CD4-positive, alpha-beta T cell (primary cell): ENCODE measurements at regions of chr9 and their contacts with region 1.

Region 1: GRCh38 chr9:36487482-36488388 is 85.0 kb upstream of the MELK start:
- DNase-seq: peak; percentile 75 to 97 (median 90)
- ATAC-seq: peak; percentile 84
- H3K4me3 ChIP-seq: peak overlapping the region; percentile 75
- H3K4me3 Mint-ChIP-seq: peak overlapping the region; percentile 94
- H3K27ac ChIP-seq: peak overlapping the region; percentile 84 to 87
- H3K27ac Mint-ChIP-seq: peak overlapping the region; percentile 97
- H3K4me1 ChIP-seq: peaks cover 42% of the 10 kb centered on the region
- H3K4me1 Mint-ChIP-seq: peaks cover 67% of the 10 kb centered on the region
- H3K27me3 ChIP-seq: no peaks in the 10 kb centered on the region
- H3K27me3 Mint-ChIP-seq: no peaks in the 10 kb centered on the region
- CTCF ChIP-seq: no peak

Region 2: GRCh38 chr9:36258208-36258988 is 229.3 kb before region 1 on chr9 and contains the start of gene GNE:
- CTCF ChIA-PET with region 1: no interaction called
- POLR2A ChIA-PET with region 1: interaction called, 3 read pairs
- intact Hi-C with region 1: loop called in 1 of 2 experiments (anchors 5 kb)
- DNase-seq: peak; percentile 94 to 98 (median 97)
- ATAC-seq: peak; percentile 89
- H3K4me3 ChIP-seq: peak within 1 kb of the TSS; percentile 66
- H3K4me3 Mint-ChIP-seq: peak within 1 kb of the TSS; percentile 99
- H3K27ac ChIP-seq: peak within 1 kb of the TSS; percentile 88 to 93
- H3K27ac Mint-ChIP-seq: peak within 1 kb of the TSS; percentile 91
- H3K4me1 ChIP-seq: peaks cover 19% of the 10 kb centered on the region
- H3K4me1 Mint-ChIP-seq: peaks cover 6% of the 10 kb centered on the region
- H3K27me3 ChIP-seq: no peaks in the 10 kb centered on the region
- H3K27me3 Mint-ChIP-seq: no peaks in the 10 kb centered on the region
- CTCF ChIP-seq: no peak
- total RNA-seq, gene GNE: 12.5 to 14.6 TPM

Region 3: GRCh38 chr9:36400332-36401163 is 87.2 kb before region 1 on chr9:
- CTCF ChIA-PET with region 1: no interaction called
- POLR2A ChIA-PET with region 1: interaction called, 22 read pairs
- intact Hi-C with region 1: loop called in 1 of 2 experiments (anchors 2 kb)
- DNase-seq: peak; percentile 80 to 96 (median 90)
- ATAC-seq: peak; percentile 74
- H3K4me3 ChIP-seq: peak overlapping the region; percentile 75
- H3K4me3 Mint-ChIP-seq: peak overlapping the region; percentile 92
- H3K27ac ChIP-seq: peak overlapping the region; percentile 88 to 98
- H3K27ac Mint-ChIP-seq: peak overlapping the region; percentile 94
- H3K4me1 ChIP-seq: peaks cover 18% of the 10 kb centered on the region
- H3K4me1 Mint-ChIP-seq: peaks cover 54% of the 10 kb centered on the region
- H3K27me3 ChIP-seq: no peaks in the 10 kb centered on the region
- H3K27me3 Mint-ChIP-seq: no peaks in the 10 kb centered on the region
- CTCF ChIP-seq: no peak

Region 4: DNA sequence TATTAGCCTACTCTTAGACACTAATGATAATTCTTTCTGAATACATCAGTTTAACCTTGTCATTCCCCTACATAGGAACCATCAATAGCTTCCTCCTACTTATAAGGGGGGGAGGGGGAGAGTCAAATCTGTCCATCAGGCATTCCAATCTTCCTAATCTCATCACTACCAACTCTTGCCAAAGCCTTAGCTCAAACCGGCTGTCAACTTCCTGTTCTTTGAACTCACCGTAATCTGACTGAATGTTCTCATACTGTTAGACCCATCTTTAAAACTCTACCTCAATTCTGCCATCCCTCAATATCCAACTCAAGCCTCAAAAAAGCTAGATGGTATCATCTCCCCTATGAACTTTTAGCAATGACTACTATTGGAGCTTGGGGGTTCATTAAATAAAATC is 45.8 kb before region 1 on chr9:
- CTCF ChIA-PET with region 1: no interaction called
- POLR2A ChIA-PET with region 1: interaction called, 8 read pairs
- intact Hi-C with region 1: loop called in 1 of 2 experiments (anchors 5 kb)
- DNase-seq: peak in 4 of 14 experiments; percentile 11 to 35 (median 21)
- ATAC-seq: peak; percentile 57
- H3K4me3 ChIP-seq: no peak overlapping the region
- H3K4me3 Mint-ChIP-seq: no peak overlapping the region
- H3K27ac ChIP-seq: no peak overlapping the region
- H3K27ac Mint-ChIP-seq: no peak overlapping the region
- H3K4me1 ChIP-seq: peaks cover 28% of the 10 kb centered on the region
- H3K4me1 Mint-ChIP-seq: peaks cover 78% of the 10 kb centered on the region
- H3K27me3 ChIP-seq: no peaks in the 10 kb centered on the region
- H3K27me3 Mint-ChIP-seq: no peaks in the 10 kb centered on the region
- CTCF ChIP-seq: no peak

Region 5: DNA sequence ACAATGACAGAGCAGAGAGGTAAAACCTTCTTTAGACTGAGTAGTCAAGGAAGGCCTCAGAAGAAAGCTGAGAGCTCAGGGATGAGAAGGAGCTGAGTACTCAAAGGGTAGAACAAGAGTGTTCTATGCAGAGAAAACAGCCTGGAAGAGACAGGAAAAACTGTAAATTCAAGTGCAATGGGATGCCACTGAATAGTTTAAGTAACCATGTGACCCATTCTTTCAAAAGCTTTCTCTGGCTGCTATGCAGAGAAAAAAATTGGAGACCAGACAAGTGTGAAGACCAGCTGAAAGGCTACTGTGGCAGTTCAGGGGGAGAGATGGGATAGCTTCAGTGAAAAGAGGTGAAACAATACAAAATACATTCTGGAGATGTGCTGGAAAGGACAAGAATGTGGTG is 26.4 kb before region 1 on chr9:
- CTCF ChIA-PET with region 1: interaction called, 3 read pairs
- POLR2A ChIA-PET with region 1: interaction called, 17 read pairs
- intact Hi-C with region 1: loop called in 1 of 2 experiments (anchors 1 kb)
- DNase-seq: no peak
- ATAC-seq: no peak
- H3K4me3 ChIP-seq: no peak overlapping the region
- H3K4me3 Mint-ChIP-seq: peak overlapping the region; percentile 5
- H3K27ac ChIP-seq: peak overlapping the region in 1 of 2 donors; percentile 4
- H3K27ac Mint-ChIP-seq: peak overlapping the region; percentile 29
- H3K4me1 ChIP-seq: peaks cover 26% of the 10 kb centered on the region
- H3K4me1 Mint-ChIP-seq: peaks cover 68% of the 10 kb centered on the region
- H3K27me3 ChIP-seq: no peaks in the 10 kb centered on the region
- H3K27me3 Mint-ChIP-seq: no peaks in the 10 kb centered on the region
- CTCF ChIP-seq: no peak

Region 6: GRCh38 chr9:36470643-36471290 is 17.0 kb before region 1 on chr9:
- CTCF ChIA-PET with region 1: interaction called, 3 read pairs
- POLR2A ChIA-PET with region 1: interaction called, 71 read pairs
- intact Hi-C with region 1: loop called in 1 of 2 experiments (anchors 2 kb)
- DNase-seq: peak in 12 of 14 experiments; percentile 29 to 88 (median 48)
- ATAC-seq: peak; percentile 94
- H3K4me3 ChIP-seq: peak overlapping the region; percentile 46
- H3K4me3 Mint-ChIP-seq: peak overlapping the region; percentile 83
- H3K27ac ChIP-seq: peak overlapping the region; percentile 72 to 79
- H3K27ac Mint-ChIP-seq: peak overlapping the region; percentile 89
- H3K4me1 ChIP-seq: peaks cover 28% of the 10 kb centered on the region
- H3K4me1 Mint-ChIP-seq: peaks cover 42% of the 10 kb centered on the region
- H3K27me3 ChIP-seq: no peaks in the 10 kb centered on the region
- H3K27me3 Mint-ChIP-seq: no peaks in the 10 kb centered on the region
- CTCF ChIP-seq: no peak

Region 7: GRCh38 chr9:36499174-36499890 is 11.6 kb after region 1 on chr9:
- CTCF ChIA-PET with region 1: interaction called, 4 read pairs
- POLR2A ChIA-PET with region 1: interaction called, 36 read pairs
- intact Hi-C with region 1: no loop called
- DNase-seq: no peak
- ATAC-seq: no peak
- H3K4me3 ChIP-seq: no peak overlapping the region
- H3K4me3 Mint-ChIP-seq: no peak overlapping the region
- H3K27ac ChIP-seq: no peak overlapping the region
- H3K27ac Mint-ChIP-seq: no peak overlapping the region
- H3K4me1 ChIP-seq: peaks cover 10% of the 10 kb centered on the region
- H3K4me1 Mint-ChIP-seq: peaks cover 37% of the 10 kb centered on the region
- H3K27me3 ChIP-seq: no peaks in the 10 kb centered on the region
- H3K27me3 Mint-ChIP-seq: no peaks in the 10 kb centered on the region
- CTCF ChIP-seq: no peak